T-cell (primary cell): ENCODE measurements at regions of chrX and their contacts with region 1.

Region 1: DNA sequence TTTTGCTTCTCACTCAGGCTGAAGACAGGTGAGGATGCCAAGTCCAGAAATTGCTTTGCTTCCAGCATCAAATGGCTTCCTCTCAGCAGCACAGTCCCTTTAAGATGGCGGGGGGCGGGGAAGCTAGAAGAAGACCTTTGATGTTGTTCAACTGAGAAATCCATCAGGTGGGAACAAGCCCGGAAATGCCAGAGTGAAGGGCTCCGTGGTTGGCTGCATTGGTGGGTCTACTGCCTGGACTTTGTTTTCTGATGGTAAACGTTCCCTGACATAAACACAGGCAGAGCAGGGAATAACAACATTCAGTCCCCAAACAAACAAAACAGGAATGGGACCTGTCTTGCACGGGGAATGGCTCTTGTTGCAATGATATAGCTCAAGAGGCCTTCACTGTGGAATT is 37.3 kb downstream of the APLN start:
- DNase-seq: no peak
- ATAC-seq: no peak
- H3K4me3 ChIP-seq: no peak overlapping the region
- H3K4me3 Mint-ChIP-seq: no peak overlapping the region
- H3K27ac ChIP-seq: no peak overlapping the region
- H3K27ac Mint-ChIP-seq: no peak overlapping the region
- H3K4me1 ChIP-seq: no peaks in the 10 kb centered on the region
- H3K4me1 Mint-ChIP-seq: peaks cover 0 to 8% (median 0%) of the 10 kb centered on the region in 3 donors
- H3K27me3 ChIP-seq: no peaks in the 10 kb centered on the region
- H3K27me3 Mint-ChIP-seq: peaks cover 0 to 21% of the 10 kb centered on the region in 2 donors

Region 2: DNA sequence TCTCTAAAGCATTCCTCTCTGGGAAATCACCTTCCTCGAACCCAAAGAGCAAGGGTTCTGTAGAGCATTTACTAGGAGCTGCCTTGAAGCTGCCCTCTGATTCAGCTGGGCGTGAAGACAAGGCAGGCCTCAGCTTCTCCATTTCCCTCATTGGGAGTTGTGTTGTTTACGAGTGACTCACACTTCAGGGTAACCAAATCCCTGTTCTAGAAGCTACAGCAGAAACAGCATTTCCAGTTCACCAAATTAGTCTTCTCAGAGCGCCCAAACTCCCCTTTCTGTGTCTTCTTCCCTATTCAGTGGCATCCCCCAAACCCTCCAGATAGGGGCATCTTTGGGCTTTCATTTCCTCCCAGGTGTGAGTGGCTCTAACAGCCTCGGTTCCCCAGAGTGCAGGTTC is 120.5 kb after region 1 on chrX:
- CTCF ChIA-PET with region 1: no interaction called
- POLR2A ChIA-PET with region 1: interaction called in 1 of 2 experiments, 13 read pairs
- DNase-seq: no peak
- ATAC-seq: no peak
- H3K4me3 ChIP-seq: no peak overlapping the region
- H3K4me3 Mint-ChIP-seq: no peak overlapping the region
- H3K27ac ChIP-seq: no peak overlapping the region
- H3K27ac Mint-ChIP-seq: peak overlapping the region in 1 of 2 donors; percentile 52
- H3K4me1 ChIP-seq: peaks cover 0 to 43% of the 10 kb centered on the region in 2 experiments
- H3K4me1 Mint-ChIP-seq: peaks cover 22 to 43% (median 30%) of the 10 kb centered on the region in 3 donors
- H3K27me3 ChIP-seq: no peaks in the 10 kb centered on the region
- H3K27me3 Mint-ChIP-seq: peaks cover 0 to 14% of the 10 kb centered on the region in 2 donors